ENCODE measurements at regions of chr16 and their contacts with region 1.

Region 1: DNA sequence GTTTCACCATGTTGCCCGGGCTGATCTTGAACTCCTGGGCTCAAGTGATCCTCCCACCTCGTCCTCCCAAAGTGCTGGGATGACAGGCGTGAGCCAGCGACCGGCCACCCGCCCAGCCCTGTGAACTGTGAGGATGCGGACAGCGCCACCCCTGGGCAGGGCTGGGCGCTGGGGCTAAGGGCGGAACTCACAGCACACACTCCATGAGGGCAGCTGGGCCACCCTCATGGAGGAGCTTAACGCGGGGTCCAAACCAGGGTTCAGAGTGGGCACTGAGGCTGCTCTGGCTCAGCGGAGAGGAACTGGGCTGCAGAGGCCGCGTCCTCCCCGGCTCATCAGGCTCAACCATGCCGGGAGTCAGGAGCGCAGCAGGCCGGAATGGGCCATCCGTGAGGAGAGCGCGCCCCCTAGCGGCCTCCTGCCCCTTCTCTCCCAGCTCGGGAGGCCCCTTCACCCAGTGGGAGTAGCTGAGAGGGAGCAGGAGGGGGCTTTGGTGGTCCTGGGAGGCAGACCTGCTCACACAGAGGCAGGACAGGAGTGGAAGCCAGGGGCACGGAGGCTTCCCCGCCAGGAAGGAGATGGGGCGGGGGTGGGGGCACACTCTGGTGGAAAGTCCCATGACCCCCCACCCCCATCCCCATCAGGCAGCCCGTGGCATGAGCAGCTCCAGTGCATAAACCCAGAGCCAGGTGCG is 13.8 kb downstream of the CORO7 start:
- DNase-seq: peak in 1 of 2 experiments; percentile 97
- H3K4me3 ChIP-seq: no peak overlapping the region
- H3K27ac ChIP-seq: no peak overlapping the region
- H3K4me1 ChIP-seq: peaks cover 0 to 4% (median 2%) of the 10 kb centered on the region in 4 experiments; a peak in 3 of 7 replicates
- H3K27me3 ChIP-seq: no peaks in the 10 kb centered on the region
- CTCF ChIP-seq: peak; percentile 91 to 97 (median 91)
- EP300 ChIP-seq: no peak
- POLR2A ChIP-seq: no peak
- RAD21 ChIP-seq: peak; percentile 97 to 98

Region 2: GRCh38 chr16:4253394-4254150 is 149.0 kb before region 1 on chr16:
- CTCF ChIA-PET with region 1: interaction called, 52 read pairs
- POLR2A ChIA-PET with region 1: no interaction called
- DNase-seq: peak; percentile 98
- H3K4me3 ChIP-seq: peak overlapping the region; percentile 41 to 70 (median 58)
- H3K27ac ChIP-seq: no peak overlapping the region; the same call in 1 of the 2 replicates
- H3K4me1 ChIP-seq: peaks cover 0 to 3% (median 0%) of the 10 kb centered on the region in 4 experiments; a peak in 1 of 7 replicates
- H3K27me3 ChIP-seq: no peaks in the 10 kb centered on the region
- CTCF ChIP-seq: no peak
- EP300 ChIP-seq: no peak
- POLR2A ChIP-seq: peak; percentile 53 to 70
- RAD21 ChIP-seq: peak; percentile 87 to 91

Region 3: DNA sequence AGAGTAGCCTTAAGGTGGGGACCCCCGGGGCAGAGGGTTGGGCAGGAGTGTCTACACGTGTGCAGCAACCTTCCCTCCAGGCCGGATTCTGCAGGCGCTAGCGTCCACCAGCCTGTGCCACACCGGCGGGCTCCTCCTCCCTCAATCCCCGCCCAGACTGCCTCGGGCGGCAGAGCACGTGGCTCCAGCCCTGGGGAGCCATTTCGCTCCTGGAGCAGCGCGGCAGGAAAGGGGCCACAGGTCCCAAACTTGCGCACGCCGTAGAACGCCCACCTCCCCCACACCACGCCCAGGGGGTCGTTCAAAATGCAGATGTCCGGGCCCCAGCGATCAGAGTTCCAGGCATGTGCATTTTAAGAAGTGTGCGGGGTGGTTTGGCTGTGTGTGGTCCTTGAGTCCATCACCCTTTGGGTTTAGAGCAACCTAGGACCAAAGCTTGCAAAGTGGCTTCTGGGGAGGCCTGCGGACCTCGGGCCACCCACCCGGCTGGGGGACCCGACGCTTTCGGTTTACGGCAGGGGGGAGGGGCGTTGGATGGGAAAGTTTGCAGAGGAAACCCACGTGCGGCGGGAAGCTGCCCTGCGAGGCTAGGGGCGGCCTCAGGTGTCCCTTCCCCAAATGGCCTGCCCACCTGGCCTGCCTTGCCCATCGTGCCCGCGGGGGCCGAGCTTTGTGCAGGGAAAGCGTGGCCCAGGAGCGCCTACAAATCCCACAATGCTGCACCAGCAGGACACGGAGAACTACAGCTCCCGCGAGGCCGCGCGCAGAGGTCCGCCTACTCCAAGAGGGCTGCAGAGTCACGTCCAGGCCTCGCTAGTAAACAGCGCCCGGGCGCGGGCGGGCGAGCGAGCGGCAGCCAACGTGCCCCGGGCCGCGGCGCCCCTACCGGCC is 131.2 kb before region 1 on chr16:
- CTCF ChIA-PET with region 1: interaction called, 11 read pairs
- POLR2A ChIA-PET with region 1: interaction called, 4 read pairs
- DNase-seq: peak in 1 of 2 experiments; percentile 91
- H3K4me3 ChIP-seq: peak overlapping the region; percentile 68 to 97 (median 84)
- H3K27ac ChIP-seq: peak overlapping the region; percentile 96
- H3K4me1 ChIP-seq: peaks cover 3 to 11% (median 8%) of the 10 kb centered on the region in 4 experiments
- H3K27me3 ChIP-seq: no peaks in the 10 kb centered on the region
- CTCF ChIP-seq: peak in 2 of 3 experiments; percentile 7 to 38; a peak in 3 of 4 replicates
- EP300 ChIP-seq: no peak
- POLR2A ChIP-seq: peak in 1 of 2 experiments; percentile 88
- RAD21 ChIP-seq: no peak; a peak in 1 of 4 replicates

Region 4: GRCh38 chr16:4298761-4299522 is 103.6 kb before region 1 on chr16:
- CTCF ChIA-PET with region 1: interaction called, 24 read pairs
- POLR2A ChIA-PET with region 1: no interaction called
- DNase-seq: peak in 1 of 2 experiments; percentile 66
- H3K4me3 ChIP-seq: no peak overlapping the region
- H3K27ac ChIP-seq: no peak overlapping the region; the same call in 1 of the 2 replicates
- H3K4me1 ChIP-seq: peaks cover 4 to 13% (median 5%) of the 10 kb centered on the region in 4 experiments
- H3K27me3 ChIP-seq: no peaks in the 10 kb centered on the region
- CTCF ChIP-seq: no peak
- EP300 ChIP-seq: no peak
- POLR2A ChIP-seq: no peak
- RAD21 ChIP-seq: no peak

Region 5: DNA sequence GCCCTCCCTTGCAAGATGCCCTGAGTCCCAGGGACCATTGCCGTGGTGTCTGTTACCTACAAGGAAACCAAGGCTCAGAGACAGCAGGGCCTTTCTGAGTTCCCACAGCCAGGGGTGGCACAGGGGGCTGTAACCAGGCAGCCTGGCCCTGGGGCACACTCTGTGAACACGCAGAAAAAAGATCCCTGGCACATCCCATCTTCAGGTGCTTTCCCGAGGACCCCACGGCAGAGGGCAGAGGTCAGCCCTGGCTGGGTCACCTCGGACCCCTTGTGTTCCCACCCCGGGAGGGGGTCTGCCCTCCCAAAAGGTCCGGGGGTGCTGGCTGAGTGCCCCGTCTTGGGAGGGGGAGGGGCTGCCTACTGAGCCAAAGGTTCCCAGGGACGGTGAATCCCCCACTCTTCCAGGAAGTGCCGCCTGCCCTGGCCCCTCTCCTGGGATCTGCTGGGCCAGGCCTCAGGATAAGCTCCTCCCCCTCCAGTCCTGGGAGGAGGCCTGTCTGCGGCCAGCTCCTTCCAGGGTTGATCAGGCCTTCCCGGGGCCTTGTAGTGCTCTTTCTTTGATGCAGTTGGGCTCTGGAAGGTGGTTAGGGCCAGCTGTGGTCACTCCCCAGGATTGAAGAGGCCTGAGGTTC is 78.6 kb before region 1 on chr16:
- CTCF ChIA-PET with region 1: interaction called, 211 read pairs
- POLR2A ChIA-PET with region 1: no interaction called
- DNase-seq: peak in 1 of 2 experiments; percentile 77
- H3K4me3 ChIP-seq: peak overlapping the region in 1 of 4 experiments; percentile 11; a peak in 1 of 8 replicates
- H3K27ac ChIP-seq: no peak overlapping the region
- H3K4me1 ChIP-seq: peaks cover 5 to 38% (median 31%) of the 10 kb centered on the region in 4 experiments
- H3K27me3 ChIP-seq: no peaks in the 10 kb centered on the region
- CTCF ChIP-seq: no peak
- EP300 ChIP-seq: no peak
- POLR2A ChIP-seq: no peak
- RAD21 ChIP-seq: no peak

Region 6: GRCh38 chr16:4350787-4351659 is 51.6 kb before region 1 on chr16 and contains the start of gene PAM16:
- CTCF ChIA-PET with region 1: interaction called, 159 read pairs
- POLR2A ChIA-PET with region 1: interaction called, 15 read pairs
- DNase-seq: peak; percentile 87 to 100
- H3K4me3 ChIP-seq: peak within 1 kb of the TSS; percentile 91 to 97 (median 96)
- H3K27ac ChIP-seq: peak within 1 kb of the TSS; percentile 85
- H3K4me1 ChIP-seq: peaks cover 0 to 4% (median 0%) of the 10 kb centered on the region in 4 experiments; a peak in 1 of 7 replicates
- H3K27me3 ChIP-seq: peaks cover 0 to 2% (median 0%) of the 10 kb centered on the region in 4 experiments; a peak in 1 of 7 replicates
- CTCF ChIP-seq: no peak
- EP300 ChIP-seq: no peak
- POLR2A ChIP-seq: peak in 1 of 2 experiments; percentile 76; a peak in 2 of 3 replicates
- RAD21 ChIP-seq: no peak
- total RNA-seq, gene PAM16: 78.3 and 84.4 TPM in 2 replicates

Region 7: DNA sequence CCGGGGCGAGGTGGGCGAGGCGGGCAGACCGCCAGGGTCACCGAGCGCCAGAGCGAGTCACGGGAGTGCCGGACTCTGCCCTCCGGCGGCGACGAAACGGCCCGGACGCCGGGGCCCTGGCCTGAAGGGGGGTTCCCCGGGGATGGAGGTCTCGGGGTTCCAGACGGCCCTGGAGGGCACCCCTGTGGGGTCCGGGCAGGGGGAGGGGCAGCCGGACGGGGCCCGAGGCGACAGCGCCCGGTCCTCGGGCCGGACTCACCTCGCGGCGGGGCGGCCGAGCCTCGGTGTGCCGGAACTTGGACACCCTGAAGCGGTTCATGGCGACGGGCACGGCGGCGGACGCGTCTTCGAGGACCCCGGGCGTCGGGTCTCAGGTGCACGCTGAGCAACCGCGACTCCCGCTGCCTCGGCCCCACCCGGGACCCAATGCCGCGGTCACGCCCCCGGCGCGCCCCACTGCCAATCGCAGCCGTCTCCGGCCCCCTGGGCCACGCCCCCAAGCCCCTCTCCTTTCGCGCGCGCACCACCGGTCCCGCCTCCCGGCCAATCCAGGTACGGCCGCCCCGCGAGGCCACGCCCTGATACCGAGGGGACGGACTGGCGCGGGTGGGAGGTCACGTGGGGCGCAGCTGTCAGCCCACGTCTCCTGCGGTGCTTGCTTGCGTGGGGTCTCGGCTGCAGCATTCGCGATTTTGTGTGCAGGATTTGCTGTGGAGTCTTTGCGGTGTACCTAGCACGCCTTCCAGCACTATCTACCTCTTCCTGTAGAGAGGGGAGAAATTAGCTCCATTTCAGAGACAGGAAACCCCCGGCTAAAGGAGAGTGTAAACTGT is 13.8 kb after region 1 on chr16 and contains the start of gene CORO7:
- CTCF ChIA-PET with region 1: interaction called, 134 read pairs
- POLR2A ChIA-PET with region 1: interaction called, 3 read pairs
- DNase-seq: peak in 1 of 2 experiments; percentile 97
- H3K4me3 ChIP-seq: peak within 1 kb of the TSS; percentile 53 to 78 (median 64)
- H3K27ac ChIP-seq: no peak within 1 kb of the TSS
- H3K4me1 ChIP-seq: peaks cover 2 to 11% (median 4%) of the 10 kb centered on the region in 4 experiments; a peak in 5 of 7 replicates
- H3K27me3 ChIP-seq: no peaks in the 10 kb centered on the region; a peak in 2 of 7 replicates
- CTCF ChIP-seq: no peak
- EP300 ChIP-seq: no peak
- POLR2A ChIP-seq: peak in 1 of 2 experiments; percentile 24; a peak in 1 of 3 replicates
- RAD21 ChIP-seq: no peak
- total RNA-seq, gene CORO7: 25.8 and 29.8 TPM in 2 replicates

Region 8: GRCh38 chr16:4487955-4488498 is 85.4 kb after region 1 on chr16:
- CTCF ChIA-PET with region 1: no interaction called
- POLR2A ChIA-PET with region 1: no interaction called
- DNase-seq: no peak
- H3K4me3 ChIP-seq: no peak overlapping the region
- H3K27ac ChIP-seq: no peak overlapping the region
- H3K4me1 ChIP-seq: no peaks in the 10 kb centered on the region
- H3K27me3 ChIP-seq: no peaks in the 10 kb centered on the region
- CTCF ChIP-seq: no peak
- EP300 ChIP-seq: no peak
- POLR2A ChIP-seq: no peak
- RAD21 ChIP-seq: no peak